Pancreas (tissue), 10 donors: ENCODE measurements at regions of chr5 and their contacts with region 1.

Region 1: GRCh38 chr5:176573564-176574296 is 24.6 kb downstream of the CDHR2 start:
- DNase-seq: peak; percentile 37 to 92 (median 66)
- ATAC-seq: peak; percentile 69 to 86 (median 80)
- H3K4me3 ChIP-seq: no peak overlapping the region
- H3K27ac ChIP-seq: no peak overlapping the region
- H3K4me1 ChIP-seq: no peaks in the 10 kb centered on the region
- H3K27me3 ChIP-seq: no peaks in the 10 kb centered on the region
- CTCF ChIP-seq: peak; percentile 54 to 84 (median 75)

Region 2: DNA sequence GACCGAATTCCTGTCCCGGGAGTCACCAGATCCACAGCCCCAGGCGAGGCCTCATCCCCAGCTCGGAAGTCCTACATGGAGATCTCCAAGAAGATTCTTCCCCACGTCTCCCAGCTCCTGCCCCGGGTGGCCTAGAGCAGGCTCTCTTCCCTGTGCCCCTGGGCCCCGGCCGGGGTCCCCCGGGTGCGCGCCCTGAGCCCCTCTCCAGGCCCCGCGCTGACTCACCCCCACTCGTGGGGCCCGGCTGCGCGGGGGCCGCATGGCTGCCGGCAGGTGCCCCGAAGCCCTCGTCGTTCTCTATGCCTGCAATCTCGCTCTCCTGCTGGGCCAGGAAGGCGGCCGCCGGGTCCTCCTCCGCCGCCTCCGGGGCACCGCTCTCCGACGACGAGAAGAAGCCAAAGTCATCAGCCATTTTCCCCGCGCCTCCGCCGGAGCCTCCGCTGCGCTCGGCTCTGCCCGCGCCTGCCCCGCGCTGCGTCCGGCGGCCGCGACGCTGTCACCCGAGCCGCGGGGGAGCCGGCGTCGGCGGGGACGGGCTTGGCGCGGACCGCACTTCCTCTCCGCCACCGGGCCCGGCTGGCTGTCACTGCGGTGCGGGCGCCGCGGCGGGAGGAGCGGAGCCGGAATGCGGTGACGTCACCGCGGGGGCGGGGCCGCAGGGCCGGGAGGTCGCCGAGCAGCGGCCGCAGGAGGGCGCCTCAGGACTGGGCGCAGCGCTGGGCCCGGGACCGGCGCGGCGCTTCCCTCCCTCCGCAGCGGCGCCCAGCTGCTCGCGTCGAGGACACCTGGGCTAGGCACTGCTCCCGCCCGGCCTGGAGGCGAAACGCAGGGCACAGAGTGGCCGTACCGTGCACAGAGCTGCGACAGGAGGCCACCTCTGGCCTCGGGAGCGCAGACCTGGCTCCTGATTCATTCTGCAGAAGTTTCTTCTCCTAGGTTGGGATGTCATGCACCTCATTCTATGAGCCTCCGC is 157.5 kb before region 1 on chr5 and contains the start of gene CLTB:
- intact Hi-C with region 1: loop called in 1 of 3 experiments (anchors 10 kb)
- DNase-seq: peak; percentile 88 to 99 (median 96)
- ATAC-seq: peak; percentile 97
- H3K4me3 ChIP-seq: peak within 1 kb of the TSS; percentile 64 to 100 (median 85)
- H3K27ac ChIP-seq: peak within 1 kb of the TSS; percentile 79 to 90 (median 83)
- H3K4me1 ChIP-seq: peaks cover 0 to 15% (median 0%) of the 10 kb centered on the region in 3 donors
- H3K27me3 ChIP-seq: no peaks in the 10 kb centered on the region
- CTCF ChIP-seq: peak; percentile 47 to 59 (median 56)
- total RNA-seq, gene CLTB: 28.6 to 42.3 (median 32.6) TPM

Region 3: DNA sequence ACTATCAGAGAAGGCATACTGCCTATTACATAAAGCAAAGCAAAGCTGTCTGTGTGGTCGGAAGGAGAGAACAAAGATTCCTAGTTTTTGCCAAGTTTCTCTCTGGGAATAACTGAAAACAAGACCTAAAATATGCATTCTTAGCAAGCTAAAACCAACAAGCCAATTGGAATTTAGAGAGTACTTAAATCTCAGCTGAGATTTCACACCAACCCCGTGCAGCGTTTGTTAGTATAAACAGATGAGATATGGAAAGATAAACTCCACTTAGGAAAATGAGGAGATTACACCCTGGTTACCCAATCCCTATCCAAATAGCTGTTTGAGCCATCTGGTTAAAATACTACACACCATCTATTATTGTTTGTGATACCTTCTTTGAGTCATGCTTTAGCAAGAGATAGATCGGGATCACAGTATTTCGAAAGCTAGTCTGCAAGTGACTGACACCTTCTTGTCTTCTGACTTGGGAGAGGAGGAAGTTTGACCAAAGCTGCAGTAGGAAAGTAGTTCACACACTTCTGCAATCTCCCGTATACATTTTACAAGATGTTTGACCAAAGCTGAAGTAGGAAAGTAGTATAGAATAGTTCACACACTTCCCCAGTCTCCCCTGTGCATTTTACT is 107.4 kb before region 1 on chr5:
- intact Hi-C with region 1: no loop called
- DNase-seq: no peak
- ATAC-seq: peak in 2 of 4 donors; percentile 42 to 52
- H3K4me3 ChIP-seq: no peak overlapping the region
- H3K27ac ChIP-seq: no peak overlapping the region
- H3K4me1 ChIP-seq: peaks cover 0 to 9% (median 6%) of the 10 kb centered on the region in 3 donors
- H3K27me3 ChIP-seq: no peaks in the 10 kb centered on the region
- CTCF ChIP-seq: no peak

Region 4: DNA sequence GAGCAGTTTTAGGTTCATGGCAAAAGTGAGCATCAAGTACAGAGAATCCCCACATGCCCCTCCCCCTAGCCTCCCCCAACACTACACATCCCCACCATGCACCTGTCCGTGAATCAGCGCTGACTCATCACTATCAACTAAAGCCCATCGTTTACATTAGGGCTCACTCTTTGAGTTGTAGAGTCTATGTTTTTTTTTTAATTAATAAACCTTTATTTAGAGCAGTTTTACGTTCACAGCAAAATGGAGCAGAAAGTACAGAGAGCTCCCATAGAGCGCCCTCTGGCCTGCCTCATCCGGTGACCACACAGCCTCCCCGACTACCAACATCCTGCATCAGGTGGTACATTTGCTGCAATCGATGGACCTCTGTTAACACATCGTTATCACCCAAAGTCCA is 188.8 kb after region 1 on chr5:
- intact Hi-C with region 1: no loop called
- DNase-seq: no peak
- ATAC-seq: no peak
- H3K4me3 ChIP-seq: no peak overlapping the region
- H3K27ac ChIP-seq: no peak overlapping the region
- H3K4me1 ChIP-seq: no peaks in the 10 kb centered on the region
- H3K27me3 ChIP-seq: peaks cover 0 to 5% (median 0%) of the 10 kb centered on the region in 4 donors
- CTCF ChIP-seq: no peak